Activated B cell treated with CpG ODN at 0.5 μM for 24 hours (primary cell): ENCODE measurements at regions of chr16 and their contacts with region 1.

Region 1: DNA sequence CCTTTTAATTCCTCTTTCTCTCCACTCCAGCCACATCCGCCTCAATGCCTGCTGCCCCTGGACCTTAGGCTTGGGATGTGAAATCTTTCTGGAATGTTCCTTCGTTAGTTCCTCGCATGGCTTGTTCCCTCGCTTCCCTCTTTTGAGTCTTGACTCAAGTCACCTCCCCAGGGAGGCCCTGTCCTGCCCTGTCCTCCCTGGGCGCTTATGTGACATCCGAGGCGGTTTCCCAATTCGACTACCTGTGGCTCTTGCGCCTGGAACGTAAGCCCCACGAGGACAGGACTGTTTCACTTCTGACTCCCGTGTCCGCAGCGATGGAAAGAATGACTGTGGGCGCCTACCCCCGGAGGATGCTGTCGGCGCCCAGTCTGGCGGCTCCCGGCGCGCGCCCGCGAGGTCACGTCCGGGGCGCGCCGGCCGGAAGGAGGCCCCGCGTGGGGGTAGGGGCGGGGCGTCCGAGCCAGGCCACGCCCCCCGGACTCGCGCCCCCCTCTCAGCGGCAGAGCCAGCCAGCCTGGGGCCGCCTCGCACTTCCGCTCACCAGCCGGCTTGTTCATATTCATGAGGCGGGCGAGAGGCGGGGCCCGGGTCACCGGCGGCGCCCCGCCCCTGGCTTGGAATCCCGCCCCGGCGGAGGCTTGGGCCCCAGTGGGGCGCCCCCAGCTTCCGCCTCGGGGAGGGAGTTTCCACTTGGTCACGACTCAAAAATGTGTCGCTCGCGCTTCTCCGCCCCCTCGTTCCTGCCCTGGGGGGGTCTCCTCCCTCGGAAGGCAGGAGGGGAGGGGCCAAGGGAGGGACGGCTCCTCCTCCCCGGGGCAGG is 8.4 kb upstream of the GLIS2 start:
- DNase-seq: peak; percentile 98
- ATAC-seq: peak; percentile 86
- H3K4me3 Mint-ChIP-seq: peak overlapping the region; percentile 91
- H3K27ac Mint-ChIP-seq: peak overlapping the region; percentile 95
- H3K4me1 Mint-ChIP-seq: peaks cover 25% of the 10 kb centered on the region
- H3K27me3 Mint-ChIP-seq: no peaks in the 10 kb centered on the region
- CTCF ChIP-seq: no peak

Region 2: DNA sequence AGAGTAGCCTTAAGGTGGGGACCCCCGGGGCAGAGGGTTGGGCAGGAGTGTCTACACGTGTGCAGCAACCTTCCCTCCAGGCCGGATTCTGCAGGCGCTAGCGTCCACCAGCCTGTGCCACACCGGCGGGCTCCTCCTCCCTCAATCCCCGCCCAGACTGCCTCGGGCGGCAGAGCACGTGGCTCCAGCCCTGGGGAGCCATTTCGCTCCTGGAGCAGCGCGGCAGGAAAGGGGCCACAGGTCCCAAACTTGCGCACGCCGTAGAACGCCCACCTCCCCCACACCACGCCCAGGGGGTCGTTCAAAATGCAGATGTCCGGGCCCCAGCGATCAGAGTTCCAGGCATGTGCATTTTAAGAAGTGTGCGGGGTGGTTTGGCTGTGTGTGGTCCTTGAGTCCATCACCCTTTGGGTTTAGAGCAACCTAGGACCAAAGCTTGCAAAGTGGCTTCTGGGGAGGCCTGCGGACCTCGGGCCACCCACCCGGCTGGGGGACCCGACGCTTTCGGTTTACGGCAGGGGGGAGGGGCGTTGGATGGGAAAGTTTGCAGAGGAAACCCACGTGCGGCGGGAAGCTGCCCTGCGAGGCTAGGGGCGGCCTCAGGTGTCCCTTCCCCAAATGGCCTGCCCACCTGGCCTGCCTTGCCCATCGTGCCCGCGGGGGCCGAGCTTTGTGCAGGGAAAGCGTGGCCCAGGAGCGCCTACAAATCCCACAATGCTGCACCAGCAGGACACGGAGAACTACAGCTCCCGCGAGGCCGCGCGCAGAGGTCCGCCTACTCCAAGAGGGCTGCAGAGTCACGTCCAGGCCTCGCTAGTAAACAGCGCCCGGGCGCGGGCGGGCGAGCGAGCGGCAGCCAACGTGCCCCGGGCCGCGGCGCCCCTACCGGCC is 36.0 kb before region 1 on chr16:
- CTCF ChIA-PET with region 1: interaction called, 4 read pairs
- POLR2A ChIA-PET with region 1: interaction called, 26 read pairs
- intact Hi-C with region 1: loop called (anchors 1 kb)
- DNase-seq: peak; percentile 82
- ATAC-seq: peak; percentile 81
- H3K4me3 Mint-ChIP-seq: peak overlapping the region; percentile 86
- H3K27ac Mint-ChIP-seq: peak overlapping the region; percentile 88
- H3K4me1 Mint-ChIP-seq: peaks cover 11% of the 10 kb centered on the region
- H3K27me3 Mint-ChIP-seq: no peaks in the 10 kb centered on the region
- CTCF ChIP-seq: no peak

Region 3: GRCh38 chr16:4330277-4330874 is 22.9 kb after region 1 on chr16:
- CTCF ChIA-PET with region 1: interaction called, 37 read pairs
- POLR2A ChIA-PET with region 1: interaction called, 4 read pairs
- intact Hi-C with region 1: loop called (anchors 1 kb)
- DNase-seq: peak; percentile 73
- ATAC-seq: peak; percentile 80
- H3K4me3 Mint-ChIP-seq: no peak overlapping the region
- H3K27ac Mint-ChIP-seq: no peak overlapping the region
- H3K4me1 Mint-ChIP-seq: peaks cover 11% of the 10 kb centered on the region
- H3K27me3 Mint-ChIP-seq: no peaks in the 10 kb centered on the region
- CTCF ChIP-seq: peak; percentile 80

Region 4: DNA sequence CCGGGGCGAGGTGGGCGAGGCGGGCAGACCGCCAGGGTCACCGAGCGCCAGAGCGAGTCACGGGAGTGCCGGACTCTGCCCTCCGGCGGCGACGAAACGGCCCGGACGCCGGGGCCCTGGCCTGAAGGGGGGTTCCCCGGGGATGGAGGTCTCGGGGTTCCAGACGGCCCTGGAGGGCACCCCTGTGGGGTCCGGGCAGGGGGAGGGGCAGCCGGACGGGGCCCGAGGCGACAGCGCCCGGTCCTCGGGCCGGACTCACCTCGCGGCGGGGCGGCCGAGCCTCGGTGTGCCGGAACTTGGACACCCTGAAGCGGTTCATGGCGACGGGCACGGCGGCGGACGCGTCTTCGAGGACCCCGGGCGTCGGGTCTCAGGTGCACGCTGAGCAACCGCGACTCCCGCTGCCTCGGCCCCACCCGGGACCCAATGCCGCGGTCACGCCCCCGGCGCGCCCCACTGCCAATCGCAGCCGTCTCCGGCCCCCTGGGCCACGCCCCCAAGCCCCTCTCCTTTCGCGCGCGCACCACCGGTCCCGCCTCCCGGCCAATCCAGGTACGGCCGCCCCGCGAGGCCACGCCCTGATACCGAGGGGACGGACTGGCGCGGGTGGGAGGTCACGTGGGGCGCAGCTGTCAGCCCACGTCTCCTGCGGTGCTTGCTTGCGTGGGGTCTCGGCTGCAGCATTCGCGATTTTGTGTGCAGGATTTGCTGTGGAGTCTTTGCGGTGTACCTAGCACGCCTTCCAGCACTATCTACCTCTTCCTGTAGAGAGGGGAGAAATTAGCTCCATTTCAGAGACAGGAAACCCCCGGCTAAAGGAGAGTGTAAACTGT is 109.0 kb after region 1 on chr16 and contains the start of gene CORO7:
- CTCF ChIA-PET with region 1: no interaction called
- POLR2A ChIA-PET with region 1: interaction called, 4 read pairs
- intact Hi-C with region 1: loop called (anchors 1 kb)
- DNase-seq: peak; percentile 99
- ATAC-seq: peak; percentile 89
- H3K4me3 Mint-ChIP-seq: peak within 1 kb of the TSS; percentile 91
- H3K27ac Mint-ChIP-seq: peak within 1 kb of the TSS; percentile 95
- H3K4me1 Mint-ChIP-seq: peaks cover 36% of the 10 kb centered on the region
- H3K27me3 Mint-ChIP-seq: no peaks in the 10 kb centered on the region
- CTCF ChIP-seq: no peak
- total RNA-seq, gene CORO7: 74.6 and 86.6 TPM in 2 replicates